ENCODE measurements at regions of chr4 and their contacts with region 1.

Region 1: DNA sequence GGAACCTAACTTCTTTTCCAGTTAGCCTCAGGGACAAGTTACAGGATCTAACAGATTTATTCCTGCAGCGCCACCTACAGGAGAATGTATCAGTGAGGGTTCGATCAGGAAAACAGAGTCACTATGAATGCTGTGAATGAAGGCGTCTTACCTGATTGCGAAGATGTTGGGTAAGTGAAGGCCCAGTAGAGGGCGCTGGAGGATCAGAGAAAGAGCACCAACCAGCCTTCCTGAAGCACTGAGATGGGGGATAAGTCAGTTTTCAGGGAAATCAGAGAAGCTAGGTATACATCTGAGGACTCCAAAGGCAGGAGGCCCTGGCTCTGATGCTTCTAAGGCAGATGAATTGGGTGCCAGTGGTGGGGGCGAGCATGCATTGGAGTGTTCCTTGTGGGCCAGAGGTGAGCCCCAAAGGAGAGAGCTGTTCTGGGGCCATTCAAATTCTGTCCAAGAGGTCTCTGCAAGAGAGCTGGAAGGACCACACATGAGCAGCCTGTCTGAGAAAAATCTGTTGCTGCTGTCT is 169.9 kb upstream of the AADAT start:
- DNase-seq: peak; percentile 65
- ATAC-seq: peak; percentile 99
- H3K4me3 ChIP-seq: no peak overlapping the region
- H3K27ac ChIP-seq: no peak overlapping the region
- H3K4me1 ChIP-seq: no peaks in the 10 kb centered on the region
- H3K27me3 ChIP-seq: 0 out of 4 replicates have a peak, but pooled peaks cover 0 to 2% of the 10 kb centered on the region in 2 experiments
- CTCF ChIP-seq: peak; percentile 88 to 98 (median 97)
- EP300 ChIP-seq: no peak
- POLR2A ChIP-seq: no peak
- RAD21 ChIP-seq: peak; percentile 97

Region 2: GRCh38 chr4:169952236-169953002 is 307.3 kb before region 1 on chr4:
- CTCF ChIA-PET with region 1: no interaction called
- POLR2A ChIA-PET with region 1: no interaction called
- RAD21 ChIA-PET with region 1: no interaction called
- SMC1A ChIA-PET with region 1: no interaction called
- in situ Hi-C with region 1: no loop called
- intact Hi-C with region 1: no loop called
- DNase-seq: peak; percentile 16
- ATAC-seq: peak; percentile 66
- H3K4me3 ChIP-seq: no peak overlapping the region
- H3K27ac ChIP-seq: no peak overlapping the region
- H3K4me1 ChIP-seq: peaks cover 3% of the 10 kb centered on the region; the same call in 1 of the 2 replicates
- H3K27me3 ChIP-seq: no peaks in the 10 kb centered on the region; a peak in 1 of 4 replicates
- CTCF ChIP-seq: no peak
- EP300 ChIP-seq: 0 out of 4 replicates have a peak, but pooled peaks of 1 of the 2 experiments have one; percentile 16
- POLR2A ChIP-seq: no peak
- RAD21 ChIP-seq: no peak

Region 3: DNA sequence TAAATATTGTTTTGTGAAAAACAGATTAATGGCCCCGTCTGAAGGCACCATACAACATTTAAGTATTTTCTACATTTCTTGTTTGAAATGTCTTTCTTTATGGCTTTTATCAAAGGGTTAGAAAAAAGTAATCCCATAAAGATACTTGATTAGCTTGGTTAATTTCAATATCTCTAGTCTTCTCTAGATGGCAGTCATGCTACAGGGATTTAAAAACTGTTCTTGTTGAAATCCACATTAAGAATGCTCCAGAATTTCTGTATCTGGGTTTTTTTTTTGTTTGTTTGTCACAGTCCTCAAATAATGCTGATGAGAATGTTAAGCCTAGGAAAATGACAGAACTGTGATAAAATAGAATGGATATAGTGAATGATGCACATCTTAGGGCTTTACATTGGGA is 60.9 kb before region 1 on chr4:
- CTCF ChIA-PET with region 1: interaction called, 18 read pairs
- POLR2A ChIA-PET with region 1: no interaction called
- RAD21 ChIA-PET with region 1: interaction called, 5 read pairs
- SMC1A ChIA-PET with region 1: interaction called, 7 read pairs
- in situ Hi-C with region 1: no loop called
- intact Hi-C with region 1: no loop called
- DNase-seq: no peak
- ATAC-seq: no peak
- H3K4me3 ChIP-seq: no peak overlapping the region
- H3K27ac ChIP-seq: no peak overlapping the region
- H3K4me1 ChIP-seq: no peaks in the 10 kb centered on the region
- H3K27me3 ChIP-seq: no peaks in the 10 kb centered on the region
- CTCF ChIP-seq: peak in 2 of 3 experiments; percentile 6 to 8; a peak in 1 of 6 replicates
- EP300 ChIP-seq: no peak
- POLR2A ChIP-seq: no peak
- RAD21 ChIP-seq: 0 out of 2 replicates have a peak, but pooled peaks have one; percentile 20

Region 4: GRCh38 chr4:170248576-170248975 is 11.1 kb before region 1 on chr4:
- CTCF ChIA-PET with region 1: interaction called, 46 read pairs
- POLR2A ChIA-PET with region 1: no interaction called
- RAD21 ChIA-PET with region 1: interaction called, 10 read pairs
- SMC1A ChIA-PET with region 1: interaction called, 8 read pairs
- in situ Hi-C with region 1: no loop called
- intact Hi-C with region 1: no loop called
- DNase-seq: no peak
- ATAC-seq: no peak
- H3K4me3 ChIP-seq: no peak overlapping the region
- H3K27ac ChIP-seq: no peak overlapping the region
- H3K4me1 ChIP-seq: no peaks in the 10 kb centered on the region
- H3K27me3 ChIP-seq: no peaks in the 10 kb centered on the region
- CTCF ChIP-seq: no peak
- EP300 ChIP-seq: no peak
- POLR2A ChIP-seq: no peak
- RAD21 ChIP-seq: no peak

Region 5: GRCh38 chr4:170352231-170352630 is 92.5 kb after region 1 on chr4:
- CTCF ChIA-PET with region 1: interaction called, 35 read pairs
- POLR2A ChIA-PET with region 1: no interaction called
- RAD21 ChIA-PET with region 1: interaction called, 4 read pairs
- SMC1A ChIA-PET with region 1: interaction called, 8 read pairs
- in situ Hi-C with region 1: no loop called
- intact Hi-C with region 1: no loop called
- DNase-seq: no peak
- ATAC-seq: no peak
- H3K4me3 ChIP-seq: no peak overlapping the region
- H3K27ac ChIP-seq: no peak overlapping the region
- H3K4me1 ChIP-seq: no peaks in the 10 kb centered on the region
- H3K27me3 ChIP-seq: no peaks in the 10 kb centered on the region
- CTCF ChIP-seq: no peak
- EP300 ChIP-seq: no peak
- POLR2A ChIP-seq: no peak
- RAD21 ChIP-seq: no peak

Region 6: GRCh38 chr4:170491981-170492380 is 232.3 kb after region 1 on chr4:
- CTCF ChIA-PET with region 1: interaction called, 152 read pairs
- POLR2A ChIA-PET with region 1: no interaction called
- RAD21 ChIA-PET with region 1: interaction called, 102 read pairs
- SMC1A ChIA-PET with region 1: interaction called, 73 read pairs
- in situ Hi-C with region 1: no loop called
- intact Hi-C with region 1: loop called (anchors 1 kb)
- DNase-seq: no peak
- ATAC-seq: no peak
- H3K4me3 ChIP-seq: no peak overlapping the region
- H3K27ac ChIP-seq: no peak overlapping the region
- H3K4me1 ChIP-seq: no peaks in the 10 kb centered on the region
- H3K27me3 ChIP-seq: no peaks in the 10 kb centered on the region
- CTCF ChIP-seq: no peak
- EP300 ChIP-seq: no peak
- POLR2A ChIP-seq: no peak
- RAD21 ChIP-seq: no peak

Region 7: DNA sequence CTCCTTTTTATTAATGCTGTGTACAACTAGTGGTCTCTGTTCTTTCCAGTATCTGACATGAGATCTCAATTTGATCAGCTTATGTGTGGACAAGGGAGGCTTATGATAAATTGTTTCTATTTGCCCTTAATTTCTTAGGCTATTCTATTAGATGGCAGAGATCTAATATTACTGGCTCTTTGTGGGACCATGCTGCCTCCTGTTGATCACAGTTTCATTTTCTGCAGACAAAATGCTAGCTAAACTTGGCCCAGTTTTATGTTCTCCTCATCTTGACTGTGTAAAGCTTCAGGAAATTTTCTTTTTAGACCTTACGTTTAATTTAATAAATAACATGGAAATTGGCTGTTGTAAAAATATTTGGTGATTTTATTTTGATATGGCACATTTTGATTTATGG is 457.2 kb after region 1 on chr4:
- CTCF ChIA-PET with region 1: interaction called, 37 read pairs
- POLR2A ChIA-PET with region 1: no interaction called
- RAD21 ChIA-PET with region 1: interaction called, 18 read pairs
- SMC1A ChIA-PET with region 1: interaction called, 6 read pairs
- in situ Hi-C with region 1: no loop called
- intact Hi-C with region 1: loop called (anchors 5 kb)
- DNase-seq: no peak
- ATAC-seq: 0 out of 3 replicates have a peak, but pooled peaks have one; percentile 32
- H3K4me3 ChIP-seq: no peak overlapping the region
- H3K27ac ChIP-seq: no peak overlapping the region
- H3K4me1 ChIP-seq: no peaks in the 10 kb centered on the region
- H3K27me3 ChIP-seq: no peaks in the 10 kb centered on the region
- CTCF ChIP-seq: peak in 2 of 3 experiments; percentile 24 to 36; a peak in 2 of 6 replicates
- EP300 ChIP-seq: no peak
- POLR2A ChIP-seq: no peak
- RAD21 ChIP-seq: peak; percentile 63